Naive thymus-derived CD8-positive, alpha-beta T cell (primary cell): ENCODE measurements at regions of chr17 and their contacts with region 1.

Region 1: GRCh38 chr17:42025191-42025579 is 5.3 kb downstream of the NKIRAS2 start:
- DNase-seq: no peak
- ATAC-seq: peak in 1 of 2 donors; percentile 37
- H3K4me3 Mint-ChIP-seq: no peak overlapping the region
- H3K27ac Mint-ChIP-seq: peak overlapping the region in 4 of 10 donors; percentile 42 to 85 (median 70)
- H3K4me1 Mint-ChIP-seq: peaks cover 15 to 28% (median 24%) of the 10 kb centered on the region in 4 donors
- H3K27me3 Mint-ChIP-seq: peaks cover 0 to 8% (median 2%) of the 10 kb centered on the region in 5 donors

Region 2: DNA sequence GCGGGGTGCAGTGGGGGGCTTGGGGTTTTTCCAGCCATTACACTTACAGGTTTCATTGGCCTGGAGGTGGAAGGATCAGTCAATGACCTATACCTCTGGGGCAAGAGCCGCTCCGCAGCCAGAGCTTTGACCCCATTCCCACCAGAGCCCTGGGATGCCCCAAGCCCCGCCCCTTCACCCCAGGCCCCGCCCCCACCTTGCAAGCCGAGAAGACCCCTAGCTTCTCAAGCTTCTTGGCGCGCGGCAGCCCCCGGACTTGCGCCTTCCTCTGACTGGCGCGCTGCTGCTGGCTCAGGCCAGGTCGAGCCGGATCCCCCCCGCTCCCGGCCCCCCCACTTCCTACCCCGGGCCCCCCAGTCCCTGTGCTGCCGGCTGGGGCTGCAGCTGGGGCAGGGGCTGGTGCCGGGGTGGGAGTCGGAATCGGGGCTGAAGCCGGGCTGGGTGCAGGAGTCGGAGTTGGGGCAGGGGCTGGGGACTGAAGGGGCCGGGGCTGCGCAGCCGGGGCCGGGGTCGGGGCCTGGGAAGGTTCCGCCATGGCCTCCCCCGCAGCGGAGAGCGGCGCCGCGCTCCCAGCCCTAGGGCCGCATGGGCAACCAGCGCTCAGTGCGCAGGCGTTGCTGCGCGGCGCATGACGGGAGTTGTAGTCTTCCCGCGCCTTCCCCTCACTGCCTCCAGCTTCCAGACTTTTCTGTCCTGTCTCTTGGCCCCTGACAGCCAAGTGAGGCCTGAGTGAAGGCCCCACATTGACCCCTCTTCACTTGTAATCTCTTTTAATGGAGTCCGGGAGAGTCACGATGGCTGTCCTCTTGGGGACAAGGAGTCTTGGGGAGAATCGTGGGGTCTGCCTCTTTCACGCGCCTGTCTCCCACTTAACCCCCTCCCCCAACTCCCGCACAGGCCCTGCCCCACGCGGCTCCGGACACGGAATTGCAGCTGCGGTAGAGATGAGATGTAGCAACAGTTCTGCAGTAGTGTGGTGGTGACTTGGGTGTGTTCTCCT is 95.9 kb after region 1 on chr17 and contains the start of gene KAT2A:
- POLR2A ChIA-PET with region 1: interaction called, 14 read pairs
- DNase-seq: peak; percentile 56 to 83 (median 72)
- ATAC-seq: peak; percentile 91 to 95
- H3K4me3 Mint-ChIP-seq: peak within 1 kb of the TSS; percentile 68 to 85 (median 76)
- H3K27ac Mint-ChIP-seq: peak within 1 kb of the TSS; percentile 4 to 85 (median 72)
- H3K4me1 Mint-ChIP-seq: peaks cover 12 to 34% (median 28%) of the 10 kb centered on the region in 4 donors
- H3K27me3 Mint-ChIP-seq: no peaks in the 10 kb centered on the region
- polyA plus RNA-seq, gene KAT2A: 5.1 to 11.8 (median 8.8) TPM